ENCODE measurements at regions of chr2 and their contacts with region 1.

Region 1: GRCh38 chr2:85642725-85643124 is 25.3 kb downstream of the SFTPB start:
- DNase-seq: no peak
- ATAC-seq: no peak
- H3K4me3 ChIP-seq: no peak overlapping the region
- H3K27ac ChIP-seq: no peak overlapping the region
- H3K4me1 ChIP-seq: no peaks in the 10 kb centered on the region
- H3K27me3 ChIP-seq: no peaks in the 10 kb centered on the region
- CTCF ChIP-seq: no peak
- EP300 ChIP-seq: no peak
- POLR2A ChIP-seq: no peak
- RAD21 ChIP-seq: no peak

Region 2: DNA sequence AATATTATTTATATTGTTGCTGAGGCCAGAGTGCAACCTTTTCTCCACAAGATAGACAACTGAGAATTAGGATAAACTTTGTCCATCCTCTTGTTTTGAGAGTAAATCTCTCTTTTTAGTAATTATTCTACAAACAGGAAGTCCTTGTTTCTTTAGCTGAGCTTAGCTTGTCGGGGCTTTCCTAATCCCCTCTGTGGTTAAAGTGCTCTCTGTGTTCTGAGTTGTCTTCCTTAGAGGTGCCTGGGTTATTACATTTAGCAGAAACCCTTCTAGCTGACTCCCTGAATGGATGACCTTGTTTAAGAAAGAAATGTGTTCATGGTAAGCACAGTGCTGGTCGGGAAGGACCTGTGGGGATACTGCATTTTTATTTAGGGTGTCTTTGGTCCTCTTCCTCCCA is 14.1 kb before region 1 on chr2:
- CTCF ChIA-PET with region 1: interaction called, 3 read pairs
- POLR2A ChIA-PET with region 1: interaction called, 15 read pairs
- in situ Hi-C with region 1: no loop called
- intact Hi-C with region 1: no loop called
- DNase-seq: no peak
- ATAC-seq: no peak
- H3K4me3 ChIP-seq: no peak overlapping the region
- H3K27ac ChIP-seq: no peak overlapping the region
- H3K4me1 ChIP-seq: no peaks in the 10 kb centered on the region
- H3K27me3 ChIP-seq: no peaks in the 10 kb centered on the region
- CTCF ChIP-seq: no peak
- EP300 ChIP-seq: no peak
- POLR2A ChIP-seq: no peak
- RAD21 ChIP-seq: no peak

Region 3: GRCh38 chr2:85718009-85718391 is 75.3 kb after region 1 on chr2:
- CTCF ChIA-PET with region 1: interaction called, 10 read pairs
- POLR2A ChIA-PET with region 1: no interaction called
- in situ Hi-C with region 1: no loop called
- intact Hi-C with region 1: loop called (anchors 1 kb)
- DNase-seq: peak; percentile 36 to 55 (median 42)
- ATAC-seq: peak; percentile 86
- H3K4me3 ChIP-seq: no peak overlapping the region
- H3K27ac ChIP-seq: no peak overlapping the region
- H3K4me1 ChIP-seq: peaks cover 7 to 15% of the 10 kb centered on the region in 2 experiments; a peak in 3 of 5 replicates
- H3K27me3 ChIP-seq: peaks cover 3 to 31% of the 10 kb centered on the region in 2 experiments; a peak in 4 of 5 replicates
- CTCF ChIP-seq: peak; percentile 60 to 67 (median 67)
- EP300 ChIP-seq: no peak
- POLR2A ChIP-seq: no peak
- RAD21 ChIP-seq: peak; percentile 62 to 75